Activated T-helper 1 cell treated with anti-CD3 and anti-CD28 coated beads, Interleukin-12 subunit alpha, Interleukin-12 subunit beta, Interleukin-2, Interleukin-4 antibody, amounts not matched to agents 30 ng/mL and 10 ng/mL and 1 ng/mL, durations not matched to agents 14 hours and 24 hours and 36 hours (primary cell): ENCODE measurements at regions of chr7 and their contacts with region 1.

Region 1: DNA sequence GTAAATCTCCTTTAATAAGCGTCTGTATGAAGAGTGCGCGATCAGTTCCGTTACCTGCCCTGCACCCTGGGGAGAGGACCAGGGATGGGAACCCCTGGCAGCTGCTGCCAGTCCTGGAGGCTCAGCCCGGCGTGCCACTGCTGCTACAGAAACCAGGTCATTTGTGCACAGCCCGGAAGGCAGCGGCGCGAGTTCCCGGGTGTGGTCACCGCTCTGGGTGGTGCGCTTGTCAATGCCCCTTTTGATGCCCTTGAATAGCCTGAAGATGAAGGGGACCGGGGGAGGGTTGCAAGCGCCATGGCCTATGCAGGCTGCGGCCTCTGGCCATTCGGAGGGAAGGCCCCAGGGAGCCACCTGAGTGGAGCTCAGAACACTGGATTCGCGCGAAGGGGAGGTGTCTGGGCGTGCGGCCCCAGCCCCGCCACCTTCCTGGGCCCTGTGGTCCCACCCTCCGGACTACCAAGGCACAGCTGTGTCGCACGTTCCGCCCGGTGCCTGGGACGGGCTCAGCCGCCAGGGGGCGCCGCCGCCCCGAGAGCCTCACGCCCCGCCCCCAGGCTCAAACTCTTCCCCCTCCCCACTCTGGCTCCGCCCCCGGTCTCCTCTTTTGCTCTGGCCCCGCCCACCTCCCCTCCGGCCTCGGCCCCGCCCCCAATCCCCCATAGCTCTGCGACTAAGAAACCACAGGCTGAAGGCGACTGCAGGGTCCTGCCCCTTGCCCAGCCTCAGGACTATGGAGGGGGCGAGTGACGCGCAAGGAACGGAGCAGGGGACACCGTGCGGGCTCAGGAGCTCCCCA is 16.5 kb downstream of the AP5Z1 start:
- DNase-seq: peak; percentile 70
- H3K4me3 Mint-ChIP-seq: no peak overlapping the region
- H3K27ac Mint-ChIP-seq: no peak overlapping the region
- H3K4me1 Mint-ChIP-seq: no peaks in the 10 kb centered on the region
- H3K27me3 Mint-ChIP-seq: no peaks in the 10 kb centered on the region

Region 2: DNA sequence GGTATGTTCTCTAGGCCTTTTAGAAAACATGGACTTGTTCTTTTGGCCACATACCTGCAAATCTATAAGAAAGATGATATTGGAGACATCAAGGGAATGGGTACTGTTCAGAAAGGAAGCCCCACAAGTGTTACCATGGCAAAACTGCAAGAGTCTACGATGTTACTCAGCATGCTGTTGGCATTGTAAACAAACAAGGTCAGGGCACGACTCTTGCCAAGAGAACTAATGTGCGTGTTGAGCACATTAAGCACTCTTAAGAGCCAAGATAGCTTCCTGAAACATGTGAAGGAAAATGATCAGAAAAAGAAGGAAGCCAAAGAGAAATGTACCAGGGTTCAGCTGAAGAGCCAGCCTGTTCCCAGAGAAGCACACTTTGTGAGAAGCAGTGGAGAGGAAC is 1453.8 kb before region 1 on chr7:
- intact Hi-C with region 1: no loop called
- DNase-seq: no peak
- H3K4me3 Mint-ChIP-seq: no peak overlapping the region
- H3K27ac Mint-ChIP-seq: no peak overlapping the region
- H3K4me1 Mint-ChIP-seq: no peaks in the 10 kb centered on the region
- H3K27me3 Mint-ChIP-seq: peaks cover 7% of the 10 kb centered on the region

Region 3: GRCh38 chr7:4712281-4713182 is 79.4 kb before region 1 on chr7:
- intact Hi-C with region 1: no loop called
- DNase-seq: no peak
- H3K4me3 Mint-ChIP-seq: no peak overlapping the region
- H3K27ac Mint-ChIP-seq: no peak overlapping the region
- H3K4me1 Mint-ChIP-seq: peaks cover 44% of the 10 kb centered on the region
- H3K27me3 Mint-ChIP-seq: no peaks in the 10 kb centered on the region

Region 4: DNA sequence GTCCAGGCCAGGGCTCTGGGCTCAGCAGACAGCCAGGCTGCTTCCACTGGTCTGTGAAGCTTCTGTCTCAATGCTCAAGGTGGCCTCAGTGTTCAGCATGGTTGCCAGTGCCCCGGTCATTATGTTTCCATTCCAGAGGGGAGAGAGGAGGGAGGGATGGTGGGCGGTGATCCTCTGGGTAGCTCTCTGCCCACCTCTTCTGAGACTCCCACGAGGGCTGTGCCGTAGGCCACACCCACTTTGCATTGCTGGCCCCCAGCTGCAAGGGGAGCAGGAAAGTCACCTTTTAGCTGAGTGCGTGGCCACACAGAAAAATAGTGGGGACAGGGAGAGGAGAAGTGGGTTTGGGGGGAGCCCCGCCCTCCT is 67.3 kb before region 1 on chr7:
- intact Hi-C with region 1: no loop called
- DNase-seq: no peak
- H3K4me3 Mint-ChIP-seq: peak overlapping the region; percentile 87
- H3K27ac Mint-ChIP-seq: peak overlapping the region; percentile 90
- H3K4me1 Mint-ChIP-seq: peaks cover 24% of the 10 kb centered on the region
- H3K27me3 Mint-ChIP-seq: no peaks in the 10 kb centered on the region

Region 5: GRCh38 chr7:4861673-4862072 is 69.7 kb after region 1 on chr7 and contains the start of gene PAPOLB:
- intact Hi-C with region 1: no loop called
- DNase-seq: no peak
- H3K4me3 Mint-ChIP-seq: no peak within 1 kb of the TSS
- H3K27ac Mint-ChIP-seq: no peak within 1 kb of the TSS
- H3K4me1 Mint-ChIP-seq: no peaks in the 10 kb centered on the region
- H3K27me3 Mint-ChIP-seq: peaks cover 45% of the 10 kb centered on the region
- total RNA-seq, gene PAPOLB: not detected in 2 replicates

Region 6: DNA sequence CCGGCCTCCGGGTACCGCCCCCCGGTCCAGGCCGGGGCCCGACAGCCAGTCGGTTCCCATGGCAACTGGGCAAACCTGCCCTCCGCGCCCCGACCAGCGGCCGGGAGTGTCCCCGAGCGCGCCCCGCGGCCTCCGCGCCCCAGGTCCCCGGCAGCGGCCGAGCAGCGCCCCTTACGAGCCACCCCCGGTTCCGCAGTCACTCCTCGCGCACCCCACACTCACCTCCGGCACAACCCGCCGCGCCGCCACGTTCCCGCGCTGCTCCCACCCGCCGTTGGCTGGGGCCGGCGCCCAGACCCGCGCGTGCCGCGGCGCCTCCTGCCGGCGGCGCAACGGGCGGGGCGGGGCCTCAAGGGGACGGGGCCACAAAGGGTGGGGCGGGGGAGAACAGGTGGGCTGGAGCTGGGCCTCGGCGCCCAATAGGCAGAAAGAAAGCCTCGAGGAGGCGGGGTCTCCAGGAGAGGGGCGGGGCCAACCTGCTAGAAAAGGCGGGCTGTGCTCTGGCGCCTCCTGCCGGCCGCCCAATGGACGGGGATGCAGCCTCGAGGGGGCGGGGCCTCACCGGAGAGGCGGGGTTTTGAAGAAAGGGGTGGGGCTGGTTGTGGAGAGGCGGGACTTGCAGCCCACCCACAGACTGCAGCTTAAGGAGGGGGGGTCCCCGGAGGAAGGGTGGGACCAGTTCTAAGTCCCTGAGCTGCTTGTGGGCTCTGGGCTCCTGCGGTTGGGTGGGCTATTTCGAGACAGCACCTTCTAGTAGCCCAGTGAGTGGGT is 91.6 kb after region 1 on chr7 and contains the start of gene RADIL:
- intact Hi-C with region 1: loop called (anchors 1 kb)
- DNase-seq: peak; percentile 77
- H3K4me3 Mint-ChIP-seq: peak within 1 kb of the TSS; percentile 34
- H3K27ac Mint-ChIP-seq: no peak within 1 kb of the TSS
- H3K4me1 Mint-ChIP-seq: peaks cover 8% of the 10 kb centered on the region
- H3K27me3 Mint-ChIP-seq: peaks cover 26% of the 10 kb centered on the region
- total RNA-seq, gene RADIL: 0.24 and 0.26 TPM in 2 replicates